Activated naive CD4-positive, alpha-beta T cell treated with anti-CD3 and anti-CD28 coated beads for 36 hours (primary cell): ENCODE measurements at regions of chr11 and their contacts with region 1.

Region 1: GRCh38 chr11:132941024-132941646 is 591.2 kb downstream of the OPCML start:
- DNase-seq: peak; percentile 24
- H3K4me3 Mint-ChIP-seq: no peak overlapping the region
- H3K27ac Mint-ChIP-seq: no peak overlapping the region
- H3K4me1 Mint-ChIP-seq: peaks cover 3% of the 10 kb centered on the region
- H3K27me3 Mint-ChIP-seq: peaks cover 35% of the 10 kb centered on the region

Region 2: GRCh38 chr11:131694526-131695424 is 1246.4 kb before region 1 on chr11:
- CTCF ChIA-PET with region 1: interaction called, 4 read pairs
- intact Hi-C with region 1: loop called (anchors 2 kb)
- DNase-seq: peak; percentile 75
- H3K4me3 Mint-ChIP-seq: no peak overlapping the region
- H3K27ac Mint-ChIP-seq: no peak overlapping the region
- H3K4me1 Mint-ChIP-seq: no peaks in the 10 kb centered on the region
- H3K27me3 Mint-ChIP-seq: peaks cover 42% of the 10 kb centered on the region

Region 3: DNA sequence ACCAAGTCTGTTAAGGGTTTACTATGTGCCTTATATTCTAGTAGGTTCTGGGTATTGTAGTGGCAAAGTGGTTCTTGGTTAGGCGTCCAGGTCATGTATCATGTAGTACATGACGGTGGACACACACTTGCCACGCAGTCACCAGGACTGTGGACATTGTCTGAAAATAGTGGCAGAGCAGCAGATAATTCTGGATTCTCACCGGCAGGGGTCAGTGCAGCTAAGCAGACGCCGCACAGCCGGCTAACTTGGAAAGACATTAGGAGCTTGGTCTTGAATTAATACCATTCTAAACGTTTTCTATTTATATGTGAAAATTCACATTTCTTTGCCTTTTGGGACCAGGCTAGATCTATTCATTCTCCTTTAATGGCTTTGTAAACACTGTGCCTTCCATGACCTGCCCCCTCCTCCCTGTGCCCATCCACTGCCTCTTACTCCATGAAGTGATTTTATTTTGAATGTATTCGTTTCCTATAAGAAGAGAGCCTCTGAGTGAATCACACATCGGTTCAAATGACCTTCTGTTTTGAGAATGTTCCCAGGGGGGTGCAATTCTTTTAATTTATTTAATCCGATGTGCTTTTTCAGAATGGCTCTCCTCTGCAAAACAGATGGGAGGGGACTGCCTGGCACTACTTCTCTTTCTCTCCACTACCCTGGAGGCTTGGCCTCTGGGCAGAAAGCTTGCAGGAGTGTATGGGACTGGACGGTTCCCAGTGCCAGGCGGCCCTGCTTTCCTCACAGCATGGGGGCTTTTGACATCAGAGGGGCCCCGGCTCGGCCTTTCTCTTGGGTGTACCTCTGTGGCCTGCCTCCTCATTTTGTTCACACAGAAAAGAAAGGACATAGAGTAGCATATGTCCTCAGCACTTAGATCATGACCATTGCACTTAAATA is 1192.7 kb before region 1 on chr11:
- CTCF ChIA-PET with region 1: no interaction called
- intact Hi-C with region 1: loop called (anchors 2 kb)
- DNase-seq: peak; percentile 58
- H3K4me3 Mint-ChIP-seq: no peak overlapping the region
- H3K27ac Mint-ChIP-seq: no peak overlapping the region
- H3K4me1 Mint-ChIP-seq: no peaks in the 10 kb centered on the region
- H3K27me3 Mint-ChIP-seq: peaks cover 2% of the 10 kb centered on the region